ENCODE measurements at regions of chr17 and their contacts with region 1.

Region 1: DNA sequence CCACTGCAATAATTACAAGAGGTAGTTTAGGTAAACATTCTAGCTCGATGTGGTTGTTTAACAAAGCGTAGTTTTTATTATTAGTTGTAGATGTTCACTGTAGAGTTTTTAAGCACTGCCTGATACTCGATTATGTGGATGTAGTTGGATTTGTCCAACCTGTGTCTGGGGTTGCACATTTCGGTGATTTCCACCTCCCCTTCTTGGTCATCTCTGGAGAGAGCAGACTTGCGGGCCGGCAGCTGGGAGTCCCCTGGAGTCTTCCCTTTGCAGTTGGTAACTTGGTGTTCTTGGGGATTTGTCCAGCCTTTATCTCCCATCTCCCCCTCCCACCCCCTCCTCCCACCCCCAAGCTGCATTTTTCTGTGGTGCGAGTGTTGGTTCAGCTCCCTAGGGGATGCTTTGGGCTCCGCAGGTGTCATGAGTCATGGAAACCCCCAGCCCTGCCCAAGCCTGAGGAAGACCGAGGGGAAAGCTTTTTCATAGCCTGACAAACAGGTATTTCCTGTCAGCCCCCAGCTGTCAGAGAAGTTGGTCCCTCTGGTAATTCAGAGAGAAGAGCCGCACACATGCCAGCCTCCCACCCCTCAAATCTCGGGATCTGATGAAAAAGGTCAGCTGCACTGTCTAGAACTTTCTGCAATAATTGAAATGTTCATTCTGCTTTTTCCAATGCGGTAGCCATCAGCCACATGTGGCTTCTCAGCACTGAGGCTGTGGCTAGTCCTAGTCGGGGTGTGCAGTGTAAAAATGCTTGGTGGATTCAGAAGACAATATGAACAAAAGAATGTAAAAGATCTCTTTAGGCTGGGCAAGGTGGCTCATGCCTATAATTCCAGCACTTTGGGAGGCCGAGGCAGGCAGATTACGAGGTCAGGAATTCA is 50.3 kb downstream of the KSR1 start:
- DNase-seq: no peak
- ATAC-seq: no peak
- H3K4me3 ChIP-seq: no peak overlapping the region
- H3K27ac ChIP-seq: no peak overlapping the region
- H3K4me1 ChIP-seq: peaks cover 4% of the 10 kb centered on the region
- H3K27me3 ChIP-seq: no peaks in the 10 kb centered on the region
- CTCF ChIP-seq: no peak

Region 2: DNA sequence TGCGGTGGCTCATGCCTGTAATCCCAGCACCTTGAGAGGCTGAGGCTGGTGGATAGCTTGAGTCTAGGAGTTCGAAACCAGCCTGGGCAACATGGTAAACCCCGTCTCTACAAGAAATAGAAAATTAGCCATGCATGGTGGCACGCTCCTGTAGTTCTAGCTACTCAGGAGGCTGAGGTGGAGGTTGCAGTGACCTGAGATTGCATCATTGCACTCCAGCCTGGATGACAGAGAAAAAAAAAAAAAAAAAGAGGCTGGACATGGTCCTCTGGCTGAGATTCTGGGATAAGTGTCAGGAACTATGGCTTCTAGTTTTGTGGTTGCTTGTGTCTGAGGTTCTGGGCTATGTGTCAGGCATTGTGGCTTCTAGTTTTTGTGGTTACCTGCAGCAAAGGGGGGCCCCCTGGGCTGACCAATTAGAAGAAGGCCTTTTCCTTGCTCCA is 43.3 kb before region 1 on chr17:
- intact Hi-C with region 1: loop called in 1 of 2 experiments (anchors 5 kb)
- DNase-seq: no peak
- ATAC-seq: no peak
- H3K4me3 ChIP-seq: no peak overlapping the region
- H3K27ac ChIP-seq: no peak overlapping the region
- H3K4me1 ChIP-seq: no peaks in the 10 kb centered on the region
- H3K27me3 ChIP-seq: no peaks in the 10 kb centered on the region
- CTCF ChIP-seq: no peak

Region 3: DNA sequence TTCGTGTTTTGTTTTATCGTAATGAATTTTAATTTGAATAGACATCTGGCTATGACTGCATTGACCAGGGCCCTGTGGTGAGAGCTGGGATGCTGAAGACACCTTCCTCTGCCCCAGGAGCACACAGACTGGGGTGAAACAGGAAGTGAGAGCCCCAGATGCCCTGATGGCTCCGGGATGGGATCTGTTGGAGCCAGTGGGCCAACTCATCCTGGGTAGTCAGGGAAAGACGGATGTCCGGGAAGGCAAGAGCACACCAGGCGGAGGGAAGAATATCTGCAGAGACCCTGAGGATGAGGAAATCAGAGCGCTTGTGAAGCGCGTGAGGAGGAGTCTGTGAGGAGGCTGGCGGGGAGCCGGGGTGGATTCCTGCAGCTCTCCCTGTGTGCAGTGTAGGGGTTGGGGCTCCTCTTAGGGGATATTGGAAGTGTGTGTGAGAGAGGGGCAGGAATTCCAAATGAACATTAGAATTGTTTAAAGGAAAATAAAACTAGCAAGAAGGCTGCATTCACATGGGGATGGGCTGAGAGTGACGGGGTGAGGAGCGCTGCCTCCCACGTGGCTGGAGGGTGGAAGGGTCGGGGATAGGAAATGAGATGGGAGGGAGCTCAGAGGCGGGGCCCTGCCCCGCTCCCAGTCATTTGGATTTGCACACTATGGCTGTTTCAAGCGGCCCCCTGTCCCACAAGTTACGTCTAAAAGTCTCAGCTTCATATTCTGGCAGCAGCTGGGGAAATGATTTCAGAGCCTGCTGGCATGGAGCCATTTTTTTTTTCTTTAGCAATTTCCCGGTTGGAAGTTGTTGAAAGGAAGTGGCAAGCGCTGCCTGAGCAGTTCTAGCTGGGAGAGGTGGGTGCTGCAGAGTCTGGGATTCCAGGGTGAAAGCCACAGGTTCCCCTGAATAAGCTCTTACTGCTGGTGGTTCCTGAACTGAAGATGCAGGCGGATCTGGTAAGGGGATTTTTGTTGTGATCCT is 53.2 kb after region 1 on chr17:
- intact Hi-C with region 1: loop called in 1 of 2 experiments (anchors 10 kb)
- DNase-seq: peak; percentile 69 to 79
- ATAC-seq: peak; percentile 47 to 74 (median 70)
- H3K4me3 ChIP-seq: peak overlapping the region; percentile 50
- H3K27ac ChIP-seq: peak overlapping the region; percentile 59
- H3K4me1 ChIP-seq: peaks cover 20% of the 10 kb centered on the region
- H3K27me3 ChIP-seq: no peaks in the 10 kb centered on the region
- CTCF ChIP-seq: no peak